Heart left ventricle (tissue), 16 donors: ENCODE measurements at regions of chr12 and their contacts with region 1.

Region 1: GRCh38 chr12:49069507-49070346 is at the start of gene RHEBL1:
- DNase-seq: peak; percentile 98 to 99 (median 99)
- ATAC-seq: peak; percentile 100
- H3K4me3 ChIP-seq: peak within 1 kb of the TSS; percentile 52 to 90 (median 80)
- H3K27ac ChIP-seq: peak within 1 kb of the TSS in 10 of 12 donors; percentile 14 to 79 (median 68)
- H3K4me1 ChIP-seq: peaks cover 0 to 19% (median 14%) of the 10 kb centered on the region in 12 donors
- H3K27me3 ChIP-seq: no peaks in the 10 kb centered on the region
- CTCF ChIP-seq: peak in 1 of 12 donors; percentile 13
- POLR2A ChIP-seq: peak in 1 of 2 donors; percentile 53
- total RNA-seq, gene RHEBL1: 0.19 to 2.0 (median 0.72) TPM in 4 of 9 donors, not detected in the others

Region 2: GRCh38 chr12:49098035-49098451 is 28.3 kb after region 1 on chr12:
- intact Hi-C with region 1: loop called in 3 of 10 experiments (anchors 5 kb)
- DNase-seq: peak; percentile 27 to 60 (median 47)
- ATAC-seq: peak; percentile 13 to 35 (median 26)
- H3K4me3 ChIP-seq: no peak overlapping the region
- H3K27ac ChIP-seq: no peak overlapping the region
- H3K4me1 ChIP-seq: peaks cover 0 to 23% (median 19%) of the 10 kb centered on the region in 12 donors
- H3K27me3 ChIP-seq: peaks cover 0 to 19% (median 12%) of the 10 kb centered on the region in 9 donors
- CTCF ChIP-seq: peak; percentile 68 to 85 (median 76)
- POLR2A ChIP-seq: no peak

Region 3: GRCh38 chr12:49121047-49121696 is 51.4 kb after region 1 on chr12:
- intact Hi-C with region 1: loop called in 8 of 10 experiments (anchors 1 to 10 kb)
- DNase-seq: peak in 4 of 5 donors; percentile 27 to 54 (median 42)
- ATAC-seq: peak in 3 of 4 donors; percentile 77 to 83 (median 78)
- H3K4me3 ChIP-seq: no peak overlapping the region
- H3K27ac ChIP-seq: no peak overlapping the region
- H3K4me1 ChIP-seq: no peaks in the 10 kb centered on the region
- H3K27me3 ChIP-seq: no peaks in the 10 kb centered on the region
- CTCF ChIP-seq: peak; percentile 46 to 70 (median 63)
- POLR2A ChIP-seq: no peak